ENCODE measurements at regions of chr9 and their contacts with region 1.

Region 1: GRCh38 chr9:95715868-95716435 is 159.5 kb upstream of the ERCC6L2 start:
- DNase-seq: no peak
- ATAC-seq: no peak
- H3K4me3 ChIP-seq: no peak overlapping the region
- H3K27ac ChIP-seq: no peak overlapping the region
- H3K4me1 ChIP-seq: no peaks in the 10 kb centered on the region
- H3K27me3 ChIP-seq: no peaks in the 10 kb centered on the region
- CTCF ChIP-seq: no peak

Region 2: DNA sequence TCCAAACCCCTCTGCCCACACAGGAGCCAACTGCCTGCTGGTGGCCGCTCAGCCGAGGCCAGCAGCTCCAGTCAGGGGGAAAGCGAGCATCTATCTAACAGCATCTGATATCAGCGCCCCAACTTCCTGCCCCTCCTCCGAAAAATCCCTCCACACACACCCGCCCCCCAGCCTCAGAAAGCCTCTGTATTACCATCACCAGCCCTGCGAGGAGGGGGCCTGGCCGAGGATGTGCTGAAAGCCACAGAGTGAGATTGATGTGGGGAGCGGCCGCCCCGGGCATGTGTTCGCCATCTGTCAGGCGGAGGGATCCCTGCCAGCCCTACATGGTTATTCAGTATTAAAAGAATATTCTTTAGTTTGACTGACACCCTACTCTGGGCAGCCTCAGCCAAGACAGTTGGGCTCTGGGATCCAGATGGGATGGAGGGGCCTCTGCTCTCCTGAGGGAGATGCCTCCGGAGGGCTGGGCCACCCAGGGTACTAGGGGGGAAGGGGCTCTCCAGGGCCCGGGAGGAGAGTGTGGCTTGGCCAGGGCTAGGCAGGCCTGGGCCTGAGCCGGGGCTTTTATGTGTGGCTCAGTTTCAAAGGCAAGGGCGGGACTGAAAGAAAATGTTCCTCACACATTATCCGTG is 488.0 kb after region 1 on chr9:
- intact Hi-C with region 1: loop called in 1 of 3 experiments (anchors 10 kb)
- DNase-seq: no peak
- ATAC-seq: no peak
- H3K4me3 ChIP-seq: no peak overlapping the region
- H3K27ac ChIP-seq: no peak overlapping the region
- H3K4me1 ChIP-seq: no peaks in the 10 kb centered on the region
- H3K27me3 ChIP-seq: no peaks in the 10 kb centered on the region
- CTCF ChIP-seq: no peak